ENCODE measurements at regions of chr19 and their contacts with region 1.

Region 1: GRCh38 chr19:3154957-3155736 is 19.3 kb downstream of the GNA15 start:
- DNase-seq: peak; percentile 62
- H3K4me3 ChIP-seq: no peak overlapping the region
- H3K27ac ChIP-seq: peak overlapping the region in 1 of 4 donors; percentile 11
- H3K4me1 ChIP-seq: no peaks in the 10 kb centered on the region
- H3K27me3 ChIP-seq: no peaks in the 10 kb centered on the region
- CTCF ChIP-seq: no peak
- EP300 ChIP-seq: no peak
- POLR2A ChIP-seq: peak; percentile 6

Region 2: DNA sequence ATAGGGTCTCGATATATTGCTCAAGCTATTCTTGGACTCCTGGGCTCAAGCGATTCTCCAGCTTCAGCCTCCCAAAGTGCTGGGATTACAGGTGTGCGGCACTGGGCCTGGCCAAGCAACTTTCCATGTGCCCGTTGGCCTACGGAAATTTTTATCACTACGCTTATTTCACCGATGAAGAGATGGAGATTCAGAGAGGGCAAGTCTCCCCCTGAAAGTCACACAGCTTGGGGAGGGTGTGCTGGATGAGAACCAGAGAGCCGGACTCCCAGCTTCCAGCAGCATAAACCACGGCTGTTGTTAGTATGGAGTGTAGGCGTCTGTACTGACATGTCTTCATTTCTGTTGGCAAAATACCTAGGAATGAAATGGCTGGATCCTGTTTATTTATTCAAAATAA is 72.8 kb before region 1 on chr19:
- in situ Hi-C with region 1: no loop called
- intact Hi-C with region 1: loop called (anchors 2 kb)
- DNase-seq: no peak
- H3K4me3 ChIP-seq: no peak overlapping the region
- H3K27ac ChIP-seq: peak overlapping the region in 1 of 4 donors; percentile 63
- H3K4me1 ChIP-seq: peaks cover 0 to 51% (median 20%) of the 10 kb centered on the region in 4 donors
- H3K27me3 ChIP-seq: no peaks in the 10 kb centered on the region
- CTCF ChIP-seq: no peak
- EP300 ChIP-seq: no peak
- POLR2A ChIP-seq: no peak